HCT116 (cell line): ENCODE measurements at regions of chr12 and their contacts with region 1.

Region 1: DNA sequence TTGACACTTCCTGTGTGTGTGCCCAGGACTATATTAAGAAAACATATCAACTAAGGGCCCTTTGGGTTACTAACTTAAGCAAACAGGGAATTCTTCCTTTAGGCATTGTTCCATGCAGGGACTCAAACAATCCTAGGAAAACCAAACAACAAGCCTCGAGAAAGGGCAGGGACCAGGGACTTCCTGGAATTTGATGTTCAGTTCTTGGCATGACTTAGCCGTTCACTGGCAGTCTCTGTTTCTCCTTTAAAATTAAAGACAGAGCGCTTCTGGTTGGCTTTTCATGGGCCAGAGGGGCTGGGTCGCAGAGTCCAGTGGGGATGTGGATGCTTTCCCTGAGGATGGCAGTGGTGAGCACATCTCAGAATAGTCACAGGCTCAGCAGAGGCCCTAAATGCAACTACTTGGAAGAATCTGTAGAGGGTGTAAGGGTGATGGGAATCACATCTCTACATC is 35.2 kb downstream of the RNFT2 start:
- DNase-seq: peak; percentile 12
- ATAC-seq: peak; percentile 97
- H3K4me3 ChIP-seq: no peak overlapping the region
- H3K27ac ChIP-seq: no peak overlapping the region
- H3K4me1 ChIP-seq: peaks cover 0 to 6% of the 10 kb centered on the region in 2 experiments; a peak in 1 of 4 replicates
- H3K27me3 ChIP-seq: no peaks in the 10 kb centered on the region
- CTCF ChIP-seq: peak; percentile 30 to 57 (median 41)
- POLR2A ChIP-seq: no peak
- RAD21 ChIP-seq: peak; percentile 53

Region 2: DNA sequence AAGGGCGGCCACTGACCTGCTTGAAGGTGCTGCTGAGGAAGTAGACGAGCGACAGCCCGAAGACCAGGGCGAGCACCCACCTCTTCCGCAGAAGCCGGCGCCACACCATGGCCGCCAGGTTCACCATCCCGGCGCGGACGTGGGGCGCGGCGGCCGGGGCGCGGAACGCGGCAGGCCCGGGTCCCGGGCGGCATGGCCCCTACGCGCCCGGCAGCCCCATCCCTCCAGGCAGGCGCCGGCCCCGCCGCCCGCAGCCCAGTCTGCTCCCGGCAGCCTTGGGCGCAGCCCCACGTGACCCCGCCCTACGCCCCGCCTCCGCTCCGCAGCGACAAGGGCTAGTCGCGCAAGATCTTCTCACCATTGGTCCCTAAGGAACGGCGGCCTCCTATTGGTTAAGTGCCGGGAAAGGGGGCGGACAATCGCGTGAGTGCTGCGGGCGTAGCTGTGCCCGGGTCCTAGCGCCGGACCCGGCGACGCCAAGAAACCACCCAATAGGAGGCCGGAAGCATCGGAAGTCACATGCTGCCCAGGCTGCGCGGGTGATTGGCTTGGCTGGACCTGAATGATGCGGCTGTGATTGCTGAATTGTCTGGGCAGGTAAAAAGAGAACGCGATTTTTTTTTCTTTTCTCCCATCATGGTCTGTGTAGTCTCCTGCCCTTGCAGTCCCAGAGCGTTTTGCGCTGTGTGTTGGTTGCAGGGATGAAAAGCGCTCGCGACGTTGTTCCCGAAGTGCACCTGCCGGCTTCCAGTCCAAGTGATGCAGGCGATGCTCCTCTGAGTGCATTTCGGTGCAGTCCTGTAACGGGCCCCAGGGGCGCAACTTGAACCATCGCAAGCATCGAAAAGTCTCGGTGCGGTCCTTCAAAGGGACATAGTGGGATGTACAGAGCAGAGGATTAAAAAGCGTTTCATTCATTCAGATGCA is 35.3 kb before region 1 on chr12 and contains the starts of genes RNFT2 and SPRING1:
- CTCF ChIA-PET with region 1: no interaction called
- POLR2A ChIA-PET with region 1: no interaction called
- RAD21 ChIA-PET with region 1: no interaction called
- intact Hi-C with region 1: no loop called
- DNase-seq: peak; percentile 98
- ATAC-seq: peak; percentile 95
- H3K4me3 ChIP-seq: peak within 1 kb of the TSS; percentile 89 to 90
- H3K27ac ChIP-seq: peak within 1 kb of the TSS; percentile 37
- H3K4me1 ChIP-seq: peaks cover 11 to 21% of the 10 kb centered on the region in 2 experiments
- H3K27me3 ChIP-seq: no peaks in the 10 kb centered on the region
- CTCF ChIP-seq: peak in 1 of 3 experiments; percentile 34; a peak in 2 of 6 replicates
- POLR2A ChIP-seq: peak; percentile 50
- RAD21 ChIP-seq: no peak
- total RNA-seq, gene RNFT2: 34.9 TPM
- total RNA-seq, gene SPRING1: 28.5 TPM

Region 3: GRCh38 chr12:116955382-116956021 is 182.2 kb after region 1 on chr12:
- CTCF ChIA-PET with region 1: no interaction called
- POLR2A ChIA-PET with region 1: no interaction called
- RAD21 ChIA-PET with region 1: no interaction called
- intact Hi-C with region 1: loop called (anchors 1 kb)
- DNase-seq: peak; percentile 45
- ATAC-seq: peak; percentile 69
- H3K4me3 ChIP-seq: no peak overlapping the region
- H3K27ac ChIP-seq: no peak overlapping the region
- H3K4me1 ChIP-seq: no peaks in the 10 kb centered on the region; a peak in 1 of 4 replicates
- H3K27me3 ChIP-seq: no peaks in the 10 kb centered on the region
- CTCF ChIP-seq: peak; percentile 12 to 53 (median 33); a peak in 3 of 6 replicates
- POLR2A ChIP-seq: no peak
- RAD21 ChIP-seq: peak; percentile 82